Activated T-helper 1 cell treated with anti-CD3 and anti-CD28 coated beads, Interleukin-12 subunit alpha, Interleukin-12 subunit beta, Interleukin-2, Interleukin-4 antibody, amounts not matched to agents 30 ng/mL and 10 ng/mL and 1 ng/mL, durations not matched to agents 14 hours and 24 hours and 36 hours (primary cell): ENCODE measurements at regions of chr15 and their contacts with region 1.

Region 1: DNA sequence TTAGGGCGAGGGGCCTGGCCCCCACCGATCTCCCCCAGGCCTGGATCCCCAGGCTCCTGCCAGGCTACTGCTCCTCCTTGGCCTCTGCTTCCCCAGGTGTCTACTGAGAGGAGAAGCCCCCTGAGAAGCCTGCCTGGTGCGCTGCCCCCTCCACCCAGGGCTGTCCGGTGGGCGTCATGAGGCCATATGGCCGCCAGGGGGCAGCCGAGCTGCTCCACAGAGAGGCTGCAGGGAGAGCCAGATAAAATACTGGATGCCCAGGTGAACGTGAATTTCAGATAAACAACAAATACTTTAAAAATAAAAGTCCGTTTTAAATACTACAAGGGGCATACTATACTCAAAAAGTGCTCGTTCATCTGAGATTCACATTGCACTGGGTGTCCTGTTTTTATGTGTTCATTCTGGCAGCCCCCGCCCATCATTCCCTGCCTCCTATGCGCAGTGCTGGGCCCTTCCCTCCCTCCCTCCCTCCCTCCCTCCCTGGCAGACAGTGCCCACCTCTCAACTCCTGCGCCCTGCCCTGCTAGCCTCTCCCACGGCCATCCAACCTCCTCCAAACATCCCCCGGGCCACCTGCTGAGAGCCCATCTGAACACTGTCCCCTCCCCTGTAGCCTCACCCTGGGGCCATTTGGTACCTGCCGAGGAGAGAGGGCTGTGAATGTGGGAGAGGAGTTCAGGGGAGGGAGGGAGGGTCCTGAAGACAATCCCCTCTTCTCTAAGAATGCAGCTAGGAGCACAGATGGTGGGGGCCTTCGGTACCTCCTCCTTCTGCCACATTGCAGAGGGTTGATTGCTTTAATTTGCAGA is 29.6 kb downstream of the PSTPIP1 start:
- DNase-seq: peak; percentile 49
- H3K4me3 Mint-ChIP-seq: peak overlapping the region; percentile 33
- H3K27ac Mint-ChIP-seq: peak overlapping the region; percentile 98
- H3K4me1 Mint-ChIP-seq: peaks cover 61% of the 10 kb centered on the region
- H3K27me3 Mint-ChIP-seq: no peaks in the 10 kb centered on the region

Region 2: DNA sequence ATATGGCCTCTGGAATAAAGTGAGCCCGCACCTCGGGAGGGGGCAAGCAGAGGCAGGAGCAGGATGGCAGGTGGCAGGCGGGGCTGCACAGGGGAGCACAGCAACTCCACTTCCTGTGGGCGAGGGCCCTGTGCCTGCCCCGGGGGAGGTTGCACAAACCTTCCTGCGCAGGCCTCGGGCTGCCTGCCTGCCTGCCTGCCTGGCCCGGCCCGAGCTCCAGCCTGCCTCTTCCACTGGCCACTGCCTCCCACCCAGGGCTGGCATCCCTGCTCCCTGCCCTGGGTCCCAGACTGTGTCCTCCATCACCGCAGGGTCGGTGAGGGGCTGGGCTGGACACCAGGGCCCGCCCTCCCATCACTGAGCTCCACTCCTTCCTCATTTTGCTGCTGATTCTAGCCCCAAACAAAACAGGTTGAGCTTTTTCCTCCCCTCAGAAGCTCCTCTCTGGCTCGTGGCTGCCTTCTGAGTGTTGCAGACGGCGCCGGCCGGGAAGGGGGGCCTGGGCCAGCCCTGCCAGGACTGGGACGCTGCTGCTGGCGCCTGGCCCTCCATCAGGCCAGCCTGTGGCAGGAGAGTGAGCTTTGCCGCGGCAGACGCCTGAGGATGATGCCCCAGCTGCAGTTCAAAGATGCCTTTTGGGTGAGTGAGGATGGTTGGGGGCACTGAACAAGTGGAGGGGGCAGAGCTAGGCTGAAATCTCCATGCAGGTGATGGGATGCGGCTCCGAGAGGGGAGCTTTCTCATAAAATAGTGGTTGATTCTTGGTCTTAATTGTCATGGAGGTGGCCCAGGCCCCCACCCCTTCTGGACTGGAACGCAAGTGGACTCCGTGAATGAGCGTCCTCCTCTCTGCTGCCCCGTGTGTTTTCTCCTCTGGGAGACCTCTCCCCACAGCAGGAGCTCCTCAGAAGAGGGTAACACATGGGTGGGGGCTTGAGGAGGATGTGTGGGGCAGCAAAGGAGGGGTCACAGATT is 29.2 kb before region 1 on chr15 and contains the start of gene PSTPIP1:
- intact Hi-C with region 1: loop called (anchors 2 kb)
- DNase-seq: peak; percentile 64
- H3K4me3 Mint-ChIP-seq: peak within 1 kb of the TSS; percentile 95
- H3K27ac Mint-ChIP-seq: peak within 1 kb of the TSS; percentile 89
- H3K4me1 Mint-ChIP-seq: peaks cover 81% of the 10 kb centered on the region
- H3K27me3 Mint-ChIP-seq: no peaks in the 10 kb centered on the region
- total RNA-seq, gene PSTPIP1: 218 and 226 TPM in 2 replicates

Region 3: GRCh38 chr15:77002954-77003912 is 21.2 kb before region 1 on chr15:
- intact Hi-C with region 1: loop called (anchors 2 kb)
- DNase-seq: peak; percentile 74
- H3K4me3 Mint-ChIP-seq: peak overlapping the region; percentile 80
- H3K27ac Mint-ChIP-seq: peak overlapping the region; percentile 96
- H3K4me1 Mint-ChIP-seq: peaks cover 86% of the 10 kb centered on the region
- H3K27me3 Mint-ChIP-seq: no peaks in the 10 kb centered on the region